ENCODE measurements at regions of chr20 and their contacts with region 1.

Region 1: GRCh38 chr20:45095753-45096371 is 5.1 kb downstream of the KCNS1 start:
- DNase-seq: peak in 4 of 5 donors; percentile 17 to 37 (median 31)
- H3K4me3 ChIP-seq: no peak overlapping the region
- H3K27ac ChIP-seq: no peak overlapping the region
- H3K4me1 ChIP-seq: no peaks in the 10 kb centered on the region
- H3K27me3 ChIP-seq: no peaks in the 10 kb centered on the region
- CTCF ChIP-seq: peak; percentile 10 to 21 (median 16)
- EP300 ChIP-seq: no peak
- POLR2A ChIP-seq: no peak

Region 2: DNA sequence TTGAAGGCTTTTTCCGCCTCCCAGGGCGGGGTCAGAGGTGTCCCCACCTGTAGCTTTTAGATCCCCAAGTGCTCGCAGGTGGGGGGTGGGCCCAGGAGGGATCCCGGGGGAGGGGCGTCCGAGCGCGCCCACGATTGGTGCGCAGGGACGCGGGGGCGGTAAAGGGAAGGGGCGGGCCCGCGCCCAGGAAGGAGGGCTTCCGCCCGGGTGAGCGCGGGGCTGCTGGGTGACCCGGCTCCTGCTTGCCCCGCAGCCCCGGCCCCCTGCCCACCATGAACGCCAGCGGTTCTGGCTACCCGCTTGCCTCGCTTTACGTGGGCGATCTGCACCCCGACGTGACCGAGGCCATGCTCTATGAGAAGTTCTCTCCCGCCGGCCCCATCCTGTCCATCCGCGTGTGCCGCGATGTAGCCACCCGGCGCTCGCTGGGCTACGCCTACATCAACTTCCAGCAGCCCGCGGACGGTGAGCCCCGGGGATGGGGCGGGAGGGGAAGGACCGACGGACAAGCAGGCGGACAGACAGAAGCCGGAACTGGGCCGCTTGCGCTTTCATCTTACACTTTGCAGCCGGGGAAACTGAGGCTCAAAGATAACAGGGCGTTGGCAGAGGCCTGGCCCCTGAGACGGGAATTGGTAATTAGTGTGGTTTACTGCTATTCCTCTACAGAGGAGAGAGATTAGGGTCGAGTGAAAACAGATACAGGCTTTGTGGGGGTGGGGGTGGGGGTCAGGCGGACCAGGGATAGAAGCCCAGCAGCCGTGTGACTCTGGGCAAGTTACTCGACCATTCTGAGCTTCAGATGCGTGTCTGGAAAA is 185.8 kb before region 1 on chr20 and contains the start of gene PABPC1L:
- intact Hi-C with region 1: no loop called
- DNase-seq: peak; percentile 51 to 77 (median 62)
- H3K4me3 ChIP-seq: peak within 1 kb of the TSS; percentile 59
- H3K27ac ChIP-seq: no peak within 1 kb of the TSS
- H3K4me1 ChIP-seq: no peaks in the 10 kb centered on the region
- H3K27me3 ChIP-seq: no peaks in the 10 kb centered on the region
- CTCF ChIP-seq: no peak
- EP300 ChIP-seq: no peak
- POLR2A ChIP-seq: no peak
- total RNA-seq, gene PABPC1L: 17.9 to 34.9 (median 22.9) TPM

Region 3: GRCh38 chr20:45011108-45011526 is 84.7 kb before region 1 on chr20:
- intact Hi-C with region 1: loop called (anchors 5 to 10 kb)
- DNase-seq: peak; percentile 27 to 63 (median 43)
- H3K4me3 ChIP-seq: no peak overlapping the region
- H3K27ac ChIP-seq: no peak overlapping the region
- H3K4me1 ChIP-seq: peaks cover under 1% of the 10 kb centered on the region
- H3K27me3 ChIP-seq: no peaks in the 10 kb centered on the region
- CTCF ChIP-seq: peak in 2 of 3 donors; percentile 42 to 56
- EP300 ChIP-seq: no peak
- POLR2A ChIP-seq: no peak

Region 4: DNA sequence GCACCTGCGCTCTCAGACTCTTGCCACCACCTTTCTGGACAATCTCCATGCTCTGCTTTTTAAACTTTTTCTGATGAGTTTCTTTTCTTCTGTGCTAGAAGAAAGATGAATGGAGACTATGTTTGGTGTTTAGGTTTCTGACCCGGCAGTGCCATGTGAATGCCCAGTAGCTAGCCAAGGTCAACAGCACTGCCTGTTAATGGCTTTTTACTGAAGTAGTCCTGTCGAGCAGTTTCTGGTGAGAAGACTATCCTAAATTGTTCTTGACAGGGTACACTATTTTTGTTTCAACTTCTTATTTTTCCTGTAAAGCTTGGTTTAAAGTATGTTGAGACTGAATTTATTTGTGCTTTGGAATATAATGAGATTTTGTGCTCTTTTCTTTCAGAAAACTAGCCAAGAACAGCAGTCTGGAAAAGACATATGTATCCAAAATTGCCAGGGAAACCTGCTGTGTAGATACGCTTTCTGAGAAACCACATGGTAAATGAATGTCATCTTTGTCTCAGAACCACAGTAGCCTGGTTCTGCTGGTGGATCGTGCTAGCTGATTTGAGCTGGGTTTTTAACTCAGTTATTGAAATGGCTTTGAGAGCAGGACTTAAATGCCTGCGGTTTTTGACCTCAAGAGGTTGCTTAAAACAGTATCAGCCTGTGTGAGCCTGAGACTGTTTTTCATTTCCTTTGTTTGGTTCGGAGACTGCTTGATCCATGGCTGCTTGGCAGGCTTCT is 43.0 kb before region 1 on chr20:
- intact Hi-C with region 1: no loop called
- DNase-seq: no peak
- H3K4me3 ChIP-seq: no peak overlapping the region
- H3K27ac ChIP-seq: no peak overlapping the region
- H3K4me1 ChIP-seq: peaks cover 1% of the 10 kb centered on the region
- H3K27me3 ChIP-seq: no peaks in the 10 kb centered on the region
- CTCF ChIP-seq: no peak
- EP300 ChIP-seq: no peak
- POLR2A ChIP-seq: no peak

Region 5: GRCh38 chr20:45456632-45457031 is 360.8 kb after region 1 on chr20:
- intact Hi-C with region 1: no loop called
- DNase-seq: no peak
- H3K4me3 ChIP-seq: no peak overlapping the region
- H3K27ac ChIP-seq: no peak overlapping the region
- H3K4me1 ChIP-seq: no peaks in the 10 kb centered on the region
- H3K27me3 ChIP-seq: no peaks in the 10 kb centered on the region
- CTCF ChIP-seq: no peak
- EP300 ChIP-seq: no peak
- POLR2A ChIP-seq: no peak